ENCODE measurements at regions of chr4 and their contacts with region 1.

Region 1: DNA sequence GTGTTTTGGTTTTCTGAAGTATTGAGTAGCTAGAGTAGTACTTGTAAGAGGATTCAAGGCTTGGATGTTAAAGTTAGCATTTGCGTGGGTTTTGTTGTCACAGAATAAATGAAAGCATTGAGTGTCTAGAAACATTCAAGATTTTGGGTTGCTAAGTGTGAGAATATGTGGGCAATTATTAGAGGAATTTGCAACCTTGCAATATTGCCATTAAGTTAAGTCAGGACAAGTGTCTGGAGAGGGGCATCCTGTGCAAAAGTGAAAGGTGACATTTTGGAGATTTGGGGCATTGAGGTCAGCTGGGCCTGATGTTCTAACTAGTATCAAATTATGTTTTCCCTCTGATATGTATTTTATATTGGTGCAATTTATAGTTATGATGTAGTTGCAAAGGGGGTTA is 533.9 kb upstream of the GRID2 start:
- DNase-seq: no peak

Region 2: GRCh38 chr4:92066485-92066884 is 296.6 kb after region 1 on chr4:
- intact Hi-C with region 1: loop called in 1 of 2 experiments (anchors 5 kb)
- DNase-seq: no peak